H1 (cell line): ENCODE measurements at regions of chr16 and their contacts with region 1.

Region 1: DNA sequence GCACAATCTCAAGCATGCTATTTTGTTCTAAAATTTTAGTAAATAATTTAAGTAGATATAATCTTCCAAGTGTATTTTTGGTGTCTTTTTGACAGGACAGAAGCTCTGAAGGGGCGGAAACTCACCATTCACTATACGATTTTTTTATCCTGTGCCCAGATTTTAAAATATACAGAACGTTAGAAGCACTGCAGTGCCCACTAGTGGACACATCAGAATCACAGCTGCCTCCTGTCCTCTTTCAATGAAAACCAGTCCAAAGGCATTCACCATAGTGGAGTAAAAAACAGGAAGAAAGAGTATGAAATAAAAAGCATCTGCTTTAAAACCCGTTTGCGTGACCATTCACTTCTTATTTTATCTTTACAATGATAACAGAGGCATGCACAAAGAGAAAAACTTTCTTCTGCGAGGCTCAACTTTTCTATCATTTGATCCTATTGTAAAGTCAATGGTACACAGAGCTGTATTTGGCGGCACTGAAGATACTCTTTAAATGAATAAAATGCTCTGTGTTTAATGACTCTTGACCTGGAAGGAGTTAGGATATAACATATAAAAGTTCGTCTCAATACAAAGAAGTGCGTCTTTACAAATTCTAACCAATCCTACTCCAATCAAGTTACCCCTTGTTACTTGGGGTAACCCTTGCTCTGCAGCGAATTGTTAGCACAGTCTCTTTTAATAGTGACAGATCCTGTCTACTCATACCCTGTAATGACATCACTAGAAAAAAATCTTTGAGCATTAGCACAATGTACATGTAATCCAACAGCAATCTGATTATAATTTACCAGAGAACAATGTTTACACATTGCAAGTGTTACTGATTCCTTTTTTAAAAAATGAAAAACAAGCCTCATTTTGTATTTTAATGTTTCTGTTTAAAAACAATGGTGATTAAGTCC is 339.8 kb upstream of the PSMD7 start:
- DNase-seq: peak in 1 of 2 experiments; percentile 69
- H3K4me3 ChIP-seq: no peak overlapping the region
- H3K27ac ChIP-seq: no peak overlapping the region
- H3K4me1 ChIP-seq: no peaks in the 10 kb centered on the region
- H3K27me3 ChIP-seq: no peaks in the 10 kb centered on the region
- CTCF ChIP-seq: peak in 2 of 3 experiments; percentile 76 to 82; a peak in 3 of 4 replicates
- EP300 ChIP-seq: no peak
- POLR2A ChIP-seq: no peak
- RAD21 ChIP-seq: peak; percentile 85 to 90

Region 2: GRCh38 chr16:73878611-73879010 is 78.2 kb before region 1 on chr16:
- CTCF ChIA-PET with region 1: interaction called, 10 read pairs
- POLR2A ChIA-PET with region 1: no interaction called
- DNase-seq: no peak
- H3K4me3 ChIP-seq: no peak overlapping the region
- H3K27ac ChIP-seq: no peak overlapping the region
- H3K4me1 ChIP-seq: peaks cover 0 to 4% (median 1%) of the 10 kb centered on the region in 4 experiments; a peak in 3 of 7 replicates
- H3K27me3 ChIP-seq: no peaks in the 10 kb centered on the region
- CTCF ChIP-seq: peak in 2 of 3 experiments; percentile 31 to 56; a peak in 2 of 4 replicates
- EP300 ChIP-seq: no peak
- POLR2A ChIP-seq: no peak
- RAD21 ChIP-seq: peak; percentile 82 to 87

Region 3: GRCh38 chr16:73945631-73946030 is 11.2 kb before region 1 on chr16:
- CTCF ChIA-PET with region 1: interaction called, 16 read pairs
- POLR2A ChIA-PET with region 1: no interaction called
- DNase-seq: no peak
- H3K4me3 ChIP-seq: no peak overlapping the region
- H3K27ac ChIP-seq: no peak overlapping the region
- H3K4me1 ChIP-seq: no peaks in the 10 kb centered on the region
- H3K27me3 ChIP-seq: no peaks in the 10 kb centered on the region
- CTCF ChIP-seq: no peak
- EP300 ChIP-seq: no peak
- POLR2A ChIP-seq: no peak
- RAD21 ChIP-seq: no peak

Region 4: DNA sequence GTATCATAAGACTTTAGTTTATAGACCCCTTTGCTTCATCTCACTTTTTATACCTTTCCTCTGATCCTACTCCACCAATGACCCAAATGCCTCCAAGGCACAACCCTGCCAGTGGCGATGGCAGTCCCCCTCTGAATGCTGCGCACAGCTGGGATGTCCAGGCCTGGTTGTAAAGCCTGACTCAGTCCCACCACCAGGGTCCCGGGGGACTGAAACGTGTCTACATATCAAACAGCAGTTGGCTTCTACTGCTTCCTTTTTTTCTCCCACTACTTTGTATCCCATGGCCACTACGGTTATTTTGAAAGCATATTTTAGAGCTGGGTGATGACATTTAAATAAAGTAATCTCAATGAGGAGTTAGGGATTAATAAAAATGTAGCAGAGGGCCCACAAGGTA is 10.0 kb after region 1 on chr16:
- CTCF ChIA-PET with region 1: interaction called, 27 read pairs
- POLR2A ChIA-PET with region 1: no interaction called
- DNase-seq: no peak
- H3K4me3 ChIP-seq: no peak overlapping the region
- H3K27ac ChIP-seq: no peak overlapping the region
- H3K4me1 ChIP-seq: peaks cover 0 to 4% (median 0%) of the 10 kb centered on the region in 4 experiments; a peak in 1 of 7 replicates
- H3K27me3 ChIP-seq: no peaks in the 10 kb centered on the region
- CTCF ChIP-seq: no peak
- EP300 ChIP-seq: no peak
- POLR2A ChIP-seq: no peak
- RAD21 ChIP-seq: no peak

Region 5: DNA sequence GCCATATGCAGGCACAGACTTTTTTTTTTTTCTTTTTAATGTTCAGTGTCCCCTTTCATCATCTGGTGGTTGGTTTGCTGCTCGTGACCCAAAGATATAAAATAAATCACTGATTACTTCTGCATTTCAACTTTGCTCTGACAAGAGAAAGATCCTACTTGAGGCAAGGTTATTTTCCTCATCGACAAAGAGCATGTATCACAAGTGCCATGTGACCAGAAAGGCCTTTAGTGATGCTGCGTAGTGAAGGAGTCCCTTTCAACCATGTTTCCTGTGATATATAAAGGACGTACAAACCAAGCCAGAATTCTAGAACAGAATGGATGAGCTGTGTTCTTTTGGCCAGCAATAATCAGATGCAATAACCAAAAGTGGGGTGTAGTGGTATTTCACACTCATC is 16.3 kb after region 1 on chr16:
- CTCF ChIA-PET with region 1: interaction called, 27 read pairs
- POLR2A ChIA-PET with region 1: no interaction called
- DNase-seq: no peak
- H3K4me3 ChIP-seq: no peak overlapping the region
- H3K27ac ChIP-seq: no peak overlapping the region
- H3K4me1 ChIP-seq: peaks cover 0 to 4% (median 0%) of the 10 kb centered on the region in 4 experiments; a peak in 1 of 7 replicates
- H3K27me3 ChIP-seq: no peaks in the 10 kb centered on the region
- CTCF ChIP-seq: no peak
- EP300 ChIP-seq: no peak
- POLR2A ChIP-seq: no peak
- RAD21 ChIP-seq: no peak

Region 6: GRCh38 chr16:74094514-74094913 is 137.7 kb after region 1 on chr16:
- CTCF ChIA-PET with region 1: no interaction called
- POLR2A ChIA-PET with region 1: no interaction called
- DNase-seq: no peak
- H3K4me3 ChIP-seq: no peak overlapping the region
- H3K27ac ChIP-seq: no peak overlapping the region
- H3K4me1 ChIP-seq: peaks cover 0 to 5% (median 2%) of the 10 kb centered on the region in 4 experiments; a peak in 3 of 7 replicates
- H3K27me3 ChIP-seq: no peaks in the 10 kb centered on the region
- CTCF ChIP-seq: no peak
- EP300 ChIP-seq: no peak
- POLR2A ChIP-seq: no peak
- RAD21 ChIP-seq: no peak

Region 7: GRCh38 chr16:74275002-74275636 is 318.3 kb after region 1 on chr16:
- CTCF ChIA-PET with region 1: interaction called, 13 read pairs
- POLR2A ChIA-PET with region 1: no interaction called
- DNase-seq: no peak
- H3K4me3 ChIP-seq: peak overlapping the region in 1 of 4 experiments; percentile 8; a peak in 1 of 8 replicates
- H3K27ac ChIP-seq: no peak overlapping the region
- H3K4me1 ChIP-seq: peaks cover 0 to 6% (median under 1%) of the 10 kb centered on the region in 4 experiments; a peak in 3 of 7 replicates
- H3K27me3 ChIP-seq: no peaks in the 10 kb centered on the region
- CTCF ChIP-seq: peak in 2 of 3 experiments; percentile 16 to 26; a peak in 2 of 4 replicates
- EP300 ChIP-seq: no peak
- POLR2A ChIP-seq: no peak
- RAD21 ChIP-seq: peak; percentile 60 to 75